Activated naive CD8-positive, alpha-beta T cell treated with anti-CD3 and anti-CD28 coated beads, Interleukin-2, amount 10 ng/mL, durations not matched to agents 7 days and 5 days (primary cell): ENCODE measurements at regions of chr17 and their contacts with region 1.

Region 1: GRCh38 chr17:4143563-4144421 is 795 bp downstream of the CYB5D2 start:
- DNase-seq: peak; percentile 91
- ATAC-seq: peak; percentile 73
- H3K4me3 Mint-ChIP-seq: peak overlapping the region; percentile 97
- H3K27ac Mint-ChIP-seq: peak overlapping the region; percentile 99
- H3K4me1 Mint-ChIP-seq: peaks cover 32% of the 10 kb centered on the region
- H3K27me3 Mint-ChIP-seq: no peaks in the 10 kb centered on the region

Region 2: DNA sequence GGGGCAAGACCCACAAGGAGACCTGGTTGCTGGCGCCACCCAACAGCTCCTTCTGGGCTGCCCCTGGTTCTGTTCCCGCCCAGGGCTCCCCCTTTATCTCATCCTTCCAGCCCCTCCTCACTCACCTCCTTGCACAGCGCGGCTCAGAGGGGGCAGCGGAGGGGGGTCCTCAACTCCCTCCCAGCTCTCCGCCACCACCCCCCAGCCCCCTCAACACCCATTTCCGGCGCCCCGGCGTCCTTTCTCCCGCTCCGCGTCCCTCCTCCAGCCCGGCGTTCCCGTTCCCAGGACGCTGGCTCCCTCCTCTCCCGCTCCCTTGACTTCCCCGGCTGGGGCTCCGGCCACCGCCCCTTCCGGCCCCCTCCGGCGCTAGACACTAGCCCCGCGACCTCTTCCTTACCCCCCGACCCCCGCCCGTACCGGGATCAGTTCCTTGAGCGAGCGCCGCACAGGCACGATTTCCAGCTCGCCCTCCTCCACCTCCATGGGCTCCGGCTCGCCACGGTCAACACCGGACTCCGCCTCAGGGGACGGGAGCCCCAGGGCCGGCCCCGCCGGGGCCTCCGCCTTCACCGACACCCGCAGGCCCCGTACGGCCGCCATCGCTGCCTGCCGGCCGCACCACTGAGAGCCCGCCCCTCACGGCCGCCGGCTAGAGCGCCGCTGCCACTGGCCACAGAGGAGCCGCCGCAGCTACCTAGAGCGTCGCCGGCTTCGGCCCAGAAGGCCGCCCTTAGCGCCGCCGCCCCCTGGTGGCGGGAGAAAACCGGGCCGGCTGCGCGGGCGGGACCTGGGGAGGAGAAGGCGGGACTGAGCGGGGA is 298.0 kb before region 1 on chr17 and contains the start of gene NCBP3:
- POLR2A ChIA-PET with region 1: interaction called, 15 read pairs
- DNase-seq: peak; percentile 98
- ATAC-seq: peak; percentile 93
- H3K4me3 Mint-ChIP-seq: peak within 1 kb of the TSS; percentile 96
- H3K27ac Mint-ChIP-seq: peak within 1 kb of the TSS; percentile 93
- H3K4me1 Mint-ChIP-seq: peaks cover 21% of the 10 kb centered on the region
- H3K27me3 Mint-ChIP-seq: peaks cover 8% of the 10 kb centered on the region
- total RNA-seq, gene NCBP3: 48.3 to 53.1 TPM

Region 3: DNA sequence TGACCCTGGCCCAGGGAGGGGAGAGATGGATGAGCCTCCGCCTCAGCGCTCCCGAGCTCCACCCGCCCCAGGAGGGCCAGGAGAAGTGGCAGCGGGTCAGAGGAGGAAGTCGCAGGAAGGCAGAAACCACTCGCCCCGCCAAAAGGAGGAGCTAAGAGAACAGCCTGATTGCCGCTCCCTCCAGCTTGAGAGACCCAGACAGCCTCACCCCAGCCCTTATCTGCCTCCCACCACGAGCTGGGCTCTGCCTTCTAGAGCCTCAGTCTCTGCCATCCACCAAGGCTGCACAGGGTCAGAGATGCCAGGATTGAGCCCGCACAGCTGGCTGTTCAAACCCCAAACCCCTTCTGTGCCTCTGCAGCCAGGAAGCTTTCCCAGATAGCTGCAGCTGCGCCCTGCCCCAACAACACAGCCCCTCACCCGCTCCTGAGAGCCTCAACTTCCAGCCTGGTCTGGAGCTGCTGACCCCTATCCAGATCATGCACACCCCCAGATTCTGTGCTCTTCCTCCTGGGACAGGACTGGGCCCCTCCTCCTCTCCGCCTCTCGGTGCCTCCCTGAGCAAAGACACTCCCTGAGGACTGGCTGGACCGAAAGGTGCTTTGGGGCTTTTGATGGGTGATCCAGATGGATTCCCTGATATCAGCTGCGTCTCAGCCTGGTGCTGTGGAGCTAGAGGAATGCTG is 178.5 kb before region 1 on chr17:
- POLR2A ChIA-PET with region 1: interaction called, 23 read pairs
- DNase-seq: peak; percentile 79
- ATAC-seq: peak; percentile 63
- H3K4me3 Mint-ChIP-seq: peak overlapping the region; percentile 87
- H3K27ac Mint-ChIP-seq: peak overlapping the region; percentile 93
- H3K4me1 Mint-ChIP-seq: peaks cover 40% of the 10 kb centered on the region
- H3K27me3 Mint-ChIP-seq: peaks cover 4% of the 10 kb centered on the region

Region 4: DNA sequence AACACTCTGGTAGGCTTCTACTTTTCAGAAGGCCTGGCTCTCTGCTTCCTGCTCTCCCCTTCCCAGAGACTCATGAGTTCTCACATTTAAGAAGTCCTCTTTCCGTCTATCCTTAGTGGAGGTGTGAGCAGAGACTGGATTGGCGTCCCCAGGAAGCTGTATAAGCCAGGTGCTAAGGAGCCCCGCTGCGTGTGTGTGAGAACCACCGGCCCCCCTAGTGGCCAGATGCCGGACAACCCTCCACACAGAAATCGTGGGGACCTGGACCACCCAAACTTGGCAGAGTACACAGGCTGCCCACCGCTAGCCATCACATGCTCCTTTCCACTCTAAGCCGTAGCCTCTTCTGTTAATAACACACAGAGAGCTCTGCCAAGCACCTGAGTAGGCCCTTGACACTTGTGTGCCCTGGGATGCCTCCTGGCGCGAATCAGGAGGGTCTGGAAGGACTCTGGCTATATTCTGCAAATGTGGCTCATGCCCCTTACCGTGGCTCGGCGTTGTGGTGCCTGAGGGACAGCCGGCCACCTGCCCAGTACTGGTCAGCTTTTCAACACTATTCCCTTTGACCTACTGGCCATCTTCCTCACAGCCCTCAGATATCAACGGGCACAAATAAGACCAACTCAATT is 13.1 kb after region 1 on chr17:
- POLR2A ChIA-PET with region 1: interaction called, 23 read pairs
- DNase-seq: no peak
- ATAC-seq: no peak
- H3K4me3 Mint-ChIP-seq: no peak overlapping the region
- H3K27ac Mint-ChIP-seq: peak overlapping the region; percentile 2
- H3K4me1 Mint-ChIP-seq: peaks cover 5% of the 10 kb centered on the region
- H3K27me3 Mint-ChIP-seq: no peaks in the 10 kb centered on the region

Region 5: GRCh38 chr17:4167786-4168185 is 24.0 kb after region 1 on chr17:
- POLR2A ChIA-PET with region 1: interaction called, 14 read pairs
- DNase-seq: no peak
- ATAC-seq: no peak
- H3K4me3 Mint-ChIP-seq: no peak overlapping the region
- H3K27ac Mint-ChIP-seq: peak overlapping the region; percentile 14
- H3K4me1 Mint-ChIP-seq: peaks cover 2% of the 10 kb centered on the region
- H3K27me3 Mint-ChIP-seq: no peaks in the 10 kb centered on the region

Region 6: GRCh38 chr17:4175921-4176807 is 32.4 kb after region 1 on chr17:
- POLR2A ChIA-PET with region 1: interaction called, 32 read pairs
- DNase-seq: peak; percentile 59
- ATAC-seq: peak; percentile 82
- H3K4me3 Mint-ChIP-seq: peak overlapping the region; percentile 77
- H3K27ac Mint-ChIP-seq: peak overlapping the region; percentile 96
- H3K4me1 Mint-ChIP-seq: peaks cover 36% of the 10 kb centered on the region
- H3K27me3 Mint-ChIP-seq: no peaks in the 10 kb centered on the region

Region 7: GRCh38 chr17:4366327-4367063 is 222.7 kb after region 1 on chr17 and contains the start of gene UBE2G1:
- POLR2A ChIA-PET with region 1: interaction called, 17 read pairs
- DNase-seq: peak; percentile 100
- ATAC-seq: peak; percentile 89
- H3K4me3 Mint-ChIP-seq: peak within 1 kb of the TSS; percentile 82
- H3K27ac Mint-ChIP-seq: peak within 1 kb of the TSS; percentile 96
- H3K4me1 Mint-ChIP-seq: peaks cover 21% of the 10 kb centered on the region
- H3K27me3 Mint-ChIP-seq: no peaks in the 10 kb centered on the region
- total RNA-seq, gene UBE2G1: 65.6 to 69.4 TPM